K562 (cell line): ENCODE measurements at regions of chr17 and their contacts with region 1.

Region 1: GRCh38 chr17:3012926-3013581 is 50.4 kb downstream of the OR1D5 start:
- DNase-seq: peak; percentile 46 to 66 (median 65)
- ATAC-seq: peak; percentile 94
- H3K4me3 ChIP-seq: no peak overlapping the region
- H3K27ac ChIP-seq: no peak overlapping the region
- H3K4me1 ChIP-seq: no peaks in the 10 kb centered on the region
- H3K27me3 ChIP-seq: peaks cover 2 to 11% of the 10 kb centered on the region in 2 experiments; a peak in 4 of 5 replicates
- CTCF ChIP-seq: peak; percentile 64 to 76 (median 67)
- EP300 ChIP-seq: no peak
- POLR2A ChIP-seq: no peak
- RAD21 ChIP-seq: peak; percentile 46 to 74

Region 2: GRCh38 chr17:2828397-2829038 is 184.5 kb before region 1 on chr17:
- CTCF ChIA-PET with region 1: interaction called, 5 read pairs
- POLR2A ChIA-PET with region 1: interaction called, 3 read pairs
- in situ Hi-C with region 1: loop called (anchors 25 kb)
- intact Hi-C with region 1: no loop called
- DNase-seq: peak; percentile 66 to 81 (median 80)
- ATAC-seq: peak; percentile 92
- H3K4me3 ChIP-seq: no peak overlapping the region
- H3K27ac ChIP-seq: no peak overlapping the region
- H3K4me1 ChIP-seq: no peaks in the 10 kb centered on the region; a peak in 1 of 5 replicates
- H3K27me3 ChIP-seq: peaks cover 0 to 6% of the 10 kb centered on the region in 2 experiments; a peak in 1 of 5 replicates
- CTCF ChIP-seq: peak; percentile 73 to 79 (median 78)
- EP300 ChIP-seq: no peak
- POLR2A ChIP-seq: no peak
- RAD21 ChIP-seq: peak; percentile 31 to 82; a peak in 2 of 4 replicates

Region 3: GRCh38 chr17:2847381-2848333 is 165.4 kb before region 1 on chr17:
- CTCF ChIA-PET with region 1: interaction called, 7 read pairs
- POLR2A ChIA-PET with region 1: no interaction called
- in situ Hi-C with region 1: loop called (anchors 25 kb)
- intact Hi-C with region 1: loop called (anchors 5 kb)
- DNase-seq: no peak
- ATAC-seq: no peak
- H3K4me3 ChIP-seq: no peak overlapping the region
- H3K27ac ChIP-seq: no peak overlapping the region
- H3K4me1 ChIP-seq: no peaks in the 10 kb centered on the region
- H3K27me3 ChIP-seq: peaks cover 0 to 24% of the 10 kb centered on the region in 2 experiments; a peak in 2 of 5 replicates
- CTCF ChIP-seq: no peak
- EP300 ChIP-seq: no peak
- POLR2A ChIP-seq: no peak
- RAD21 ChIP-seq: no peak